Endothelial cell of umbilical vein (primary cell): ENCODE measurements at regions of chr2 and their contacts with region 1.

Region 1: DNA sequence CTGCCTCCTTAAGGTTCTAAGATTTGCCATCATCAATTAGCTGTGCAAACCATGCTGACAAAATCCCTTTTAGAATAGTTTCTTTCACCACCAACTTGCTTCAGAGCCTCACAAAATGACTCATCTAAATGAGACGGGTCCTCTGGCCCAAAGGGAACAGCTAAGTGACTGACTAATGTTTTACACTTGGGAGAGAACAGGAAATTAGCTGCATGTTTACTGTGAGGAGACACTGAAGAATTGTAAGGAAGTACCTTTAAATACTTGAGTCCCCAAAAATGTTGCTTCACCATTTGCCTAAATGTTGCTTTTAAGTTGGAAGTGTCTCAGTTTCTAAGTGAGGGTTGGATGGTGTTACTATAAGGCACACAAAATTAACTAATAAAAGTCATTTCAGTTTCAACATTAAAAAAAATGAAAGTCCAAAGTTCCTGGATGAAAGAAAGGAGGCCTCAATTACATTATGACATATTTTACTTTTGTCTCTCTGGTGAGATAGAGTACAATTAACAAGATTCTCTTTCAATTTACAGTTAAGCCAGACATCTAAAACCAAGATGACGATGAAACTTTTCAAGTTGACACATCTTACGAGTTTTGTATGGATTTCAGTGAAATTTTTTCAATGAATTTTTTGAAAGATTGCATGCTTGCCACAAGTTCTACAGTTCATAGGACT is 229.1 kb upstream of the FN1 start:
- DNase-seq: peak; percentile 88
- H3K4me3 ChIP-seq: no peak overlapping the region
- H3K27ac ChIP-seq: peak overlapping the region; percentile 76
- H3K4me1 ChIP-seq: peaks cover 17% of the 10 kb centered on the region
- H3K27me3 ChIP-seq: no peaks in the 10 kb centered on the region
- CTCF ChIP-seq: no peak
- POLR2A ChIP-seq: no peak

Region 2: DNA sequence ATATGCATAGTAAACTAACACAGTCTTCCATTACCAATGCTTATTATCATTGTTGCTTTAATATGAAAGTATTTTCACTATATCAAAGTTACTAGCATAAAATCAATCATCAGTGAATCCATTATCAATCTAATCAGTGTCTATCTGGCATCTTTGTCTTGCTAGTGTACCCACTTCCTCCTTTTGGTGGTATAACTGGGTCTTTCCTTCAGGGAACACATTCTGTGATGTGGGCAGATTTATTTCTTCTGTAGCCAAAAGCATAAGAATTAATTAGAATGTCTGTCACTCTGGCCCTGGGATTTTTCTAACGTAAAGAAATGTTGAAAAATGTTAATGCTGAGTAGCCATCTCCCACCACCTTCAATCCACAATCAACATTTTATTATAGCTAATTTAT is 1409.9 kb before region 1 on chr2:
- CTCF ChIA-PET with region 1: no interaction called
- POLR2A ChIA-PET with region 1: no interaction called
- dilution Hi-C with region 1: no loop called
- intact Hi-C with region 1: no loop called
- DNase-seq: no peak
- H3K4me3 ChIP-seq: no peak overlapping the region
- H3K27ac ChIP-seq: no peak overlapping the region
- H3K4me1 ChIP-seq: no peaks in the 10 kb centered on the region
- H3K27me3 ChIP-seq: no peaks in the 10 kb centered on the region
- CTCF ChIP-seq: no peak
- POLR2A ChIP-seq: no peak

Region 3: DNA sequence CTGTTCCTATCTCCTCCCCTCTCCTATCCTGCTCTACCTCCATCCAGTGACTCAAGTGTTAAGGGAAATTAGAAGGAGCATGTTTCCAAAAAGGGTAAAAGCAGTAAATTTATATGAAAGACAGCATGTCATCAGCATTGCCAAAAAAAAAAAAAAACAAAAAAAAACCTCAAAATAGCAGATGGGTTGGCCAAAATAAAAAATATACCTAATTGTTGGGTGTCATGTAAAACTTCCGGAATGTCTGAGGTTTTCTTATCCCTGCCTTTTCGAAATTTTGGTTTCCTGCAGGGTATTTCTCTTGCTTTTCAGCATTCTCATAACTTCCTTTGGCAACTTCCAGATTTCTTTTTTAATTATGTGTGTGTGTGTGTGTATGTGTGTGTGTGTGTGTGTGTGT is 12.5 kb after region 1 on chr2:
- CTCF ChIA-PET with region 1: no interaction called
- POLR2A ChIA-PET with region 1: no interaction called
- dilution Hi-C with region 1: no loop called
- intact Hi-C with region 1: loop called (anchors 1 kb)
- DNase-seq: no peak
- H3K4me3 ChIP-seq: no peak overlapping the region
- H3K27ac ChIP-seq: no peak overlapping the region
- H3K4me1 ChIP-seq: no peaks in the 10 kb centered on the region
- H3K27me3 ChIP-seq: no peaks in the 10 kb centered on the region
- CTCF ChIP-seq: no peak
- POLR2A ChIP-seq: no peak

Region 4: DNA sequence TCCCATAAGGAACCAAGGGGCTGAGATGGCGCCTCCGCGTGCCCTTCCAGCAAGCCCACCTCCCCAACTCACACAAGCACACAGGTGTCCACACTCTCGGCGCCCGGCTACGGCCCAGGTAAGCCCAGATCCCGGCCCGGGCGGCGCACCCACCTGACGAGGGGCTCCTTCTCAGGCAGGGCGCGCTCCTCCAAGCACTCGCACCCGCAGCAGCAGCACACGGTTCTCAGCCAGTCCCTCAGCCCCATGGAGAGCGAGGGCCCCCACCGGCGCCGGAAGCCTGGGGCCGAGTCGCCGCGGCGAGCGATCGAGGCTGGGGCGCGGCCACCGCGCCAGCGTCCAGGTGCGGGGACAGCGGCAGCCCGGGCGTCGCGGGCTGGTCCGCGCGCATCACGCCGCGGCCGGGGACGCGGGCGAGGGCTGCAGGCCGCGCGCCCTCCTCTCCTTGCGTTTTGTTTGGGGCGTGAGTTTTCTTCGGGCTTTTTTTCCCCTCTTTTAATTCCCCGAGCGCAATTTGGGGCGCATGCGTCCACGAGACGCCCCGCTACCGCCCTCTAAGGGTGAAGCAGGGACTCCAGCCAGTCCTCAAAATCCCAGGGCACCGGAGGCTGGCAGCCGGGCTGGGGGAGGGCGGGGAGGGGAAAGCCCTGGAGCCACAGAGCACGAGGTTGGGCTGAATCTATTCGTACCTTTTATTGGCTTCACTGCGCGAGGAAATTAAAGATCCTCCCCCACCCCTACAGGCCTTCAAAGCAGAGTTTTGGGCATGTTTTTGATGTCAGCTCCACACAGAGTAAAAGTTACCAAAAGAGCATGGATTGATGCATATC is 348.3 kb after region 1 on chr2 and contains the start of gene MREG:
- CTCF ChIA-PET with region 1: no interaction called
- POLR2A ChIA-PET with region 1: no interaction called
- dilution Hi-C with region 1: no loop called
- intact Hi-C with region 1: no loop called
- DNase-seq: peak; percentile 63
- H3K4me3 ChIP-seq: peak within 1 kb of the TSS; percentile 62 to 80 (median 72)
- H3K27ac ChIP-seq: no peak within 1 kb of the TSS
- H3K4me1 ChIP-seq: peaks cover 7% of the 10 kb centered on the region
- H3K27me3 ChIP-seq: no peaks in the 10 kb centered on the region
- CTCF ChIP-seq: peak; percentile 60 to 81
- POLR2A ChIP-seq: no peak
- total RNA-seq, gene MREG: 3.1 and 3.9 TPM in 2 replicates

Region 5: DNA sequence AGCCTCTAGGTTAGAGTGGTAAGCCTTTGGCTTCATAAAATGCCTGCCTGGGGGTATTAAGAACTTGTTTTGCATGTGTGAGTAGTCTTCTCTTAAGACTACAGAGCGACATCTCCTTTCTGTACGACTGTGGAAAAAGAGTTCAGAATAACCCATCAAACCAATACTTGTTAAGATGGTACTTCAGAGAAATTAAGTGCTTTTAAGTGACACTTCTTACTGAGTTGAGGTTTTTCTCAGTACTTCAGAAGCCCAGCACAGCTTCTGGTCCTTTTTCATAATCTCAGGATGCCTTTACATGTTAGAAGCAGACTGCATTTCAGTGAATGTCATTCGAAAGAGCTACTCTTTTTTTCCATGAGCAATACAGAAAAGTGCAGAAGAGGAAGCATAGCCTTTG is 455.0 kb after region 1 on chr2:
- CTCF ChIA-PET with region 1: no interaction called
- POLR2A ChIA-PET with region 1: no interaction called
- dilution Hi-C with region 1: no loop called
- intact Hi-C with region 1: no loop called
- DNase-seq: no peak
- H3K4me3 ChIP-seq: no peak overlapping the region
- H3K27ac ChIP-seq: no peak overlapping the region
- H3K4me1 ChIP-seq: peaks cover 13% of the 10 kb centered on the region
- H3K27me3 ChIP-seq: no peaks in the 10 kb centered on the region
- CTCF ChIP-seq: no peak
- POLR2A ChIP-seq: no peak